ENCODE measurements at regions of chr2 and their contacts with region 1.

Region 1: GRCh38 chr2:191218292-191218898 is 26.8 kb upstream of the MYO1B start:
- DNase-seq: no peak
- H3K4me3 ChIP-seq: no peak overlapping the region
- CTCF ChIP-seq: peak; percentile 60

Region 2: DNA sequence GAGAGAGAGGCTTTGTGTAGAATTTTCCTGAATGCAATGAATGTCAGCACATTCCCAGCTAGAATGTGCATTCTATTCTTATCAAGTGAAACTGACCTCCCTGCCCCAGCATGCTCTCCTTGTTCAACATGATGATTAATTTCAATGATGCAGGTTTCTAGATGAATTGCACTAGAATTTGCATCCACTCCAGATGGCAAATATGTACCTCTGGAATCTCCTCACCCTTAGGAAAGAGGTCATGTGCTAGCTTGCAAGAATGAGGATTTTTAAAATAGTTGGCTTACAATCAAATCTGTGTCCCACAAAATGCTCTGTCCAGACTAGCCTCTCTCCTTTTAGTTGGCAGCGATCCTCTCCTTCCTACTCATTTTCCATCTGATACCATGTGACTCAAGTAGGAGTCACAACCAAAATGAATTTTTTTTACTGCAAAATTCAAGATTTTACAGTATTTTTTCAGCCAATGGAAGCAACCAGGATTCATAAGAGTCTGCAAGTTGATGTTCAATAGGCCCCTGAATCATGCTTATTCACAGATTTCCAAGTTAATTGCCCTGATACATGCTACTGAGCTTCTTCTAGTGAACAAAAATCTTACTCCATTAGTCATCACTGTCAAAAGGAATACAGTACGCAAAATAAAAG is 46.6 kb before region 1 on chr2:
- CTCF ChIA-PET with region 1: interaction called, 17 read pairs
- POLR2A ChIA-PET with region 1: no interaction called
- DNase-seq: peak; percentile 94
- H3K4me3 ChIP-seq: no peak overlapping the region
- CTCF ChIP-seq: no peak

Region 3: DNA sequence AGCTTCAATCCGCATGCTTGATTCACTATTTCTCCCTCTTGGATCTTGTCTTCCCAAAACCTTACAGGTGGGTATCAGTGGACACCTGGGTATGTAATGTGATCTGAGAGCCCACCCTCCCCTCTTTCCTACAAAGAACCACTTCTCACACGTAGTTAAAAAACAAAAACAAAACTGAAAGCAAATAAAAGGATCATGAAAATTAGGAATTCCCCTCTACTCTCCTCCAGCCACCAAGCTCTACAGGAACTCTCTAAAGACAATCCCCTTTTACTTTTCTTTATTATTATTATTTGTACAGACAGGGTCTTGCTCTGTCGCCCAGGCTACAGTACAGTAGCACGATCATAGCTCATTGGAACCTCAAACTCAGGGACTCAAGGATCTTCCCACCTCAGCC is 14.0 kb before region 1 on chr2:
- CTCF ChIA-PET with region 1: interaction called, 35 read pairs
- POLR2A ChIA-PET with region 1: no interaction called
- DNase-seq: no peak
- H3K4me3 ChIP-seq: no peak overlapping the region
- CTCF ChIP-seq: no peak

Region 4: DNA sequence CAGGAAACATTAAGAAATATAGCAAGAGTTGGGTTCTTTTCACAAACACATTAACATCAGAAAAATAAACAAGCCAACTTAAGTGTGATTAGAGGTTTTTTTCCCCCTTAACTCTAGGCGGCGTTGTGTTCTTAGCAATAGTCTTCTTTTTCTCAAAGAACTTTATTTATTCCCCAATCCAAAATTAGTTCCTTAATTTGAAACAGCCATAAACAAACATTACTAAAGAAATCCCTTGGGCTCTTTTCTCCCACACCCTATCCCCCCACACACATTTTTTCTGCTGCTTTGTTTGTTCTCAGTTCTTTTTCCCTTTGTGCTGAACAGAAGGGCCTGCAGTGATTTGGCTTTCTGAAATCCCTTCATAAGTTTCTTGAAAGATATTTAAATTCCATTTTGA is 13.6 kb after region 1 on chr2:
- CTCF ChIA-PET with region 1: interaction called, 39 read pairs
- POLR2A ChIA-PET with region 1: no interaction called
- DNase-seq: no peak
- H3K4me3 ChIP-seq: no peak overlapping the region
- CTCF ChIP-seq: peak; percentile 47

Region 5: DNA sequence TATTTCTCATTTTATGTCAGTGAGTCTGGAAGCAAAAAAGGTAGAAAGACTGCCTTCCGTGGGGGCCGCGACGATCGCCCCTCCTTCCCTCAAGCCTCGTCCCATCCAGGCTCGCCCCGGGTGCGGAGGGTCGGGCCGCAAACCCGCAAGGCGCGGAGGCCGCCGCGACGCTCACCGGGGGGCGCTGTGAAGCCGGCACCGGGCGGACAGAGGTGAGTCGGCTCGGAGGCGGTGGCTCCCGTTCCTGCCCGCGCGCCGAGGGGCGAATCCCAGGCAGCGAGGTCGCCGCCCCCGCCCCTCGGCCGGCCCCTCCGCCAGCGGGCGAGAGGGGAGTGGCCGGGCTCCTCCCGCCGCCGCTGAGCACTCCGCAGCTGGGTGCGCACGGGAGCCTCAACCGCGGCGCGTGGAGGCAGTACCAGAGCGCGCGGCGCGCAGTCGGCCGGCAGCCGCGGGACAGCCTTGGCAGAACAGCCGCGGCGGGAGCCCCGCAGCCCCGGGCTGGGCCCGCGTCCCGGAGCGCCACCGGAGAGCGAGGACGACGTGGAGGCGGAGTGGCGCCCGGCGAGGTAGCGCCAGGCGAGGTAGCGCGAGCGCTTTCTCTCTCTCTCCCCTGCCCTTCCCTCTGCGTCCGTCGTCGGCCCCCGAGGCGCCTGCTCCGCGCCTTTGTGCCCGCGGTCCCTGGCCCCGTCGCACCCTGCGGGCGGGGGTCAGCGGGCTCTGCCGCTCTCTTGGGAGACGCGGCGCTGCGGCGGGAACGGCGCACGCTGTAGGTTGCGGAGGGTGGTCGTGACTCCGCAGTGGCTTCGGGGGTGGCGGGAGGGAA is 26.9 kb after region 1 on chr2 and contains the start of gene MYO1B:
- CTCF ChIA-PET with region 1: interaction called, 18 read pairs
- POLR2A ChIA-PET with region 1: interaction called, 3 read pairs
- DNase-seq: no peak
- H3K4me3 ChIP-seq: peak within 1 kb of the TSS; percentile 93
- CTCF ChIP-seq: peak; percentile 68

Region 6: GRCh38 chr2:191311628-191312027 is 93.2 kb after region 1 on chr2:
- CTCF ChIA-PET with region 1: no interaction called
- POLR2A ChIA-PET with region 1: no interaction called
- DNase-seq: no peak
- H3K4me3 ChIP-seq: no peak overlapping the region
- CTCF ChIP-seq: no peak

Region 7: DNA sequence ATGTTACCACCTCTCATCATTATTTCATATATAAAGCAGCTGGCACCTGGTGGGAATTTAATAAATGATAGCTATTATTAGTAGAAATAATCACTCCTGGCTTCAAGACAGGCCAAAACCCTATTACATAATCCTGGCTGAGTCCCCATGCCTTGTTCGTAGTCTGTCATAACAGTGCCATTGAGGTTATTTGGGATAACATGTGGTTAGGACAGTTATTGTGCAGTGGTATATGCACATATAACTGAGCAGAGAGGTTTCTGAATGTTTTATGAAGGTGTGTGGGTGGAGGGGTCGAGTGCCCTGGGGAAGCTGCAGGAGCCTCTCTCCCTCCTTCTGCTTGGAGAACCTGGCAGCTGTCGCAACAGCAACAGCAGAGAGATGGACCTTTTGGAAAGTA is 297.2 kb after region 1 on chr2:
- CTCF ChIA-PET with region 1: interaction called, 16 read pairs
- POLR2A ChIA-PET with region 1: no interaction called
- DNase-seq: no peak
- H3K4me3 ChIP-seq: no peak overlapping the region
- CTCF ChIP-seq: no peak

Region 8: DNA sequence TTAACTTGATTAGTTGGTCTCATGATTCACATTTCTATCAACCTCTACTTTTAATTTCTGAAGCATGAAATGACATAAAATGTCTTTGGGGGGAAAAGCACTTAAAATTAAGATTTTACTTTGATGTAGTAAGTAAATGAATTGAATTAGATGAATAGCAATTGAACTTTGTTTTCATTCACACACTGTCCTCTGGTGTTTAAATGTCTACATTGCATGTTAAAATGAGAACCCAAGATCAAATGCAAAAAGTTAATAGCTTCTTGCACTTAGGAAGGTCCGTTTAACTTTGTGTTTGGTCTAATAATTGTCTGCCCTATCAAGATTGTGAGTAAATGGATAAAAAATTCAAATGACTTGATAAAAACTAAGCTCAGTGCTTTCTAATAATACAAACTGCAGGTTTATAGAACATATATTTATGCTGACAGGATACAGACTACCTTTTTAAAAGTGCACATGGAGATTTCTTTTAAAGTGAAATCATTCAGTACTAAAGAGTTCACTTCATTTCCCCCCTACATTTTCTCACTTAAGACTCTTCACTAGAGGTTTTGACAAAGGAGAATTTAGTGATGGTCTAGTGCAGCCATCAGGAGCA is 303.3 kb after region 1 on chr2:
- CTCF ChIA-PET with region 1: interaction called, 16 read pairs
- POLR2A ChIA-PET with region 1: no interaction called
- DNase-seq: no peak
- H3K4me3 ChIP-seq: no peak overlapping the region
- CTCF ChIP-seq: peak; percentile 47

Measured in AG04449 (cell line).